T-cell (primary cell): ENCODE measurements at regions of chr19 and their contacts with region 1.

Region 1: DNA sequence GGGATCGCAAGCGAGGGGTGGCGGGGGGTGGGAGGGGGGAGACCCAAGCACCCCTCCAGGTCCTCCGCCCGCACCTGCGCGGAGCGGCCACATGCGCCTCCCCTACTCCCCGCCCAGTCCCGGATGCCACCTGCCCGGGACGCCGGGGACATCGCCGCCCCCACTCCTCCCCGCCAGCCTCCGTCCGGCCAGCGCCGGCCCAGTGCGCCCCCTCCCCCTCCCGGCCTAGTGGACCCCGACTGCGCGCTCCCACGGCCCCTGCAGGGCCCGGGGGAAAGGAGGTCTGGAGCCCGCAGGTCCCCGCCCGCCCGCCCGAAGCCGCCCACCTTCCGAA is 263 bp downstream of the RHPN2 start:
- DNase-seq: peak in 11 of 35 experiments; percentile 2 to 22 (median 9)
- ATAC-seq: peak; percentile 70 to 80 (median 72)
- H3K4me3 ChIP-seq: no peak overlapping the region
- H3K4me3 Mint-ChIP-seq: peak overlapping the region; percentile 53 to 72 (median 60)
- H3K27ac ChIP-seq: no peak overlapping the region
- H3K27ac Mint-ChIP-seq: no peak overlapping the region
- H3K4me1 ChIP-seq: peaks cover 0 to 18% of the 10 kb centered on the region in 2 experiments
- H3K4me1 Mint-ChIP-seq: peaks cover 0 to 5% (median 5%) of the 10 kb centered on the region in 3 donors
- H3K27me3 ChIP-seq: peaks cover 4 to 63% of the 10 kb centered on the region in 2 experiments
- H3K27me3 Mint-ChIP-seq: peaks cover 18 to 44% of the 10 kb centered on the region in 2 donors

Region 2: GRCh38 chr19:32676186-32676894 is 388.1 kb before region 1 on chr19:
- CTCF ChIA-PET with region 1: no interaction called
- POLR2A ChIA-PET with region 1: interaction called in 1 of 2 experiments, 13 read pairs
- DNase-seq: peak in 14 of 35 experiments; percentile 8 to 61 (median 25)
- ATAC-seq: peak in 1 of 4 experiments; percentile 1
- H3K4me3 ChIP-seq: peak overlapping the region; percentile 64 to 95
- H3K4me3 Mint-ChIP-seq: peak overlapping the region; percentile 82 to 97 (median 92)
- H3K27ac ChIP-seq: no peak overlapping the region
- H3K27ac Mint-ChIP-seq: no peak overlapping the region
- H3K4me1 ChIP-seq: peaks cover 15 to 42% of the 10 kb centered on the region in 2 experiments
- H3K4me1 Mint-ChIP-seq: peaks cover 31 to 38% (median 34%) of the 10 kb centered on the region in 3 donors
- H3K27me3 ChIP-seq: peaks cover 6 to 28% of the 10 kb centered on the region in 2 experiments
- H3K27me3 Mint-ChIP-seq: peaks cover 5 to 12% of the 10 kb centered on the region in 2 donors

Region 3: GRCh38 chr19:33125929-33126388 is 61.5 kb after region 1 on chr19:
- CTCF ChIA-PET with region 1: no interaction called
- POLR2A ChIA-PET with region 1: no interaction called
- DNase-seq: peak in 34 of 35 experiments; percentile 11 to 80 (median 40)
- ATAC-seq: peak; percentile 80 to 90 (median 85)
- H3K4me3 ChIP-seq: no peak overlapping the region
- H3K4me3 Mint-ChIP-seq: no peak overlapping the region
- H3K27ac ChIP-seq: no peak overlapping the region
- H3K27ac Mint-ChIP-seq: no peak overlapping the region
- H3K4me1 ChIP-seq: peaks cover 0 to 5% of the 10 kb centered on the region in 2 experiments
- H3K4me1 Mint-ChIP-seq: peaks cover 5 to 7% (median 6%) of the 10 kb centered on the region in 3 donors
- H3K27me3 ChIP-seq: no peaks in the 10 kb centered on the region
- H3K27me3 Mint-ChIP-seq: no peaks in the 10 kb centered on the region

Region 4: GRCh38 chr19:33316541-33317264 is 252.3 kb after region 1 on chr19:
- CTCF ChIA-PET with region 1: no interaction called
- POLR2A ChIA-PET with region 1: no interaction called
- DNase-seq: no peak
- ATAC-seq: no peak
- H3K4me3 ChIP-seq: no peak overlapping the region
- H3K4me3 Mint-ChIP-seq: no peak overlapping the region
- H3K27ac ChIP-seq: no peak overlapping the region
- H3K27ac Mint-ChIP-seq: no peak overlapping the region
- H3K4me1 ChIP-seq: no peaks in the 10 kb centered on the region
- H3K4me1 Mint-ChIP-seq: no peaks in the 10 kb centered on the region
- H3K27me3 ChIP-seq: peaks cover 2 to 23% of the 10 kb centered on the region in 2 experiments
- H3K27me3 Mint-ChIP-seq: peaks cover 16 to 19% of the 10 kb centered on the region in 2 donors